ENCODE measurements at regions of chr7 and their contacts with region 1.

Region 1: GRCh38 chr7:100189061-100189460 is 11.3 kb downstream of the STAG3 start:
- DNase-seq: no peak
- ATAC-seq: 0 out of 2 replicates have a peak, but pooled peaks have one; percentile 33
- H3K4me3 ChIP-seq: no peak overlapping the region
- H3K27ac ChIP-seq: no peak overlapping the region
- H3K4me1 ChIP-seq: no peaks in the 10 kb centered on the region; the same call in 1 of the 2 replicates
- H3K27me3 ChIP-seq: no peaks in the 10 kb centered on the region
- CTCF ChIP-seq: 0 out of 2 replicates have a peak, but pooled peaks have one; percentile 15

Region 2: GRCh38 chr7:100418930-100419659 is 230.0 kb after region 1 on chr7:
- CTCF ChIA-PET with region 1: no interaction called
- POLR2A ChIA-PET with region 1: interaction called, 19 read pairs
- intact Hi-C with region 1: no loop called
- DNase-seq: no peak
- ATAC-seq: 0 out of 2 replicates have a peak, but pooled peaks have one; percentile 20
- H3K4me3 ChIP-seq: no peak overlapping the region
- H3K27ac ChIP-seq: no peak overlapping the region
- H3K4me1 ChIP-seq: no peaks in the 10 kb centered on the region
- H3K27me3 ChIP-seq: no peaks in the 10 kb centered on the region
- CTCF ChIP-seq: no peak

Measured in PC-3 (cell line).